Left cardiac atrium (tissue), 4 donors: ENCODE measurements at regions of chr2 and their contacts with region 1.

Region 1: GRCh38 chr2:102240640-102241370 is 54.0 kb downstream of the IL1RL2 start:
- DNase-seq: peak; percentile 93
- ATAC-seq: peak; percentile 94 to 95

Region 2: GRCh38 chr2:101883863-101884262 is 356.9 kb before region 1 on chr2:
- intact Hi-C with region 1: loop called in 1 of 2 experiments (anchors 10 kb)
- DNase-seq: no peak
- ATAC-seq: peak; percentile 76 to 82

Region 3: GRCh38 chr2:102020596-102021181 is 220.1 kb before region 1 on chr2:
- intact Hi-C with region 1: loop called (anchors 2 to 5 kb)
- DNase-seq: peak; percentile 90
- ATAC-seq: peak; percentile 93 to 94

Region 4: GRCh38 chr2:102355526-102356380 is 114.9 kb after region 1 on chr2 and contains the start of gene IL18R1:
- intact Hi-C with region 1: loop called in 1 of 2 experiments (anchors 5 kb)
- DNase-seq: peak; percentile 86
- ATAC-seq: peak; percentile 99
- total RNA-seq, gene IL18R1: 1.2 to 5.5 TPM

Region 5: GRCh38 chr2:102442967-102443828 is 202.4 kb after region 1 on chr2:
- intact Hi-C with region 1: loop called in 1 of 2 experiments (anchors 10 kb)
- DNase-seq: no peak
- ATAC-seq: peak in 1 of 2 donors; percentile 56